K562 (cell line): ENCODE measurements at regions of chr1 and their contacts with region 1.

Region 1: GRCh38 chr1:110196917-110197765 is 13.0 kb upstream of the KCNC4 start:
- DNase-seq: peak; percentile 66 to 93 (median 91)
- ATAC-seq: peak; percentile 93
- H3K4me3 ChIP-seq: no peak overlapping the region
- H3K27ac ChIP-seq: no peak overlapping the region
- H3K4me1 ChIP-seq: no peaks in the 10 kb centered on the region
- H3K27me3 ChIP-seq: peaks cover 20 to 70% of the 10 kb centered on the region in 2 experiments
- CTCF ChIP-seq: peak; percentile 88 to 96 (median 94)
- EP300 ChIP-seq: no peak
- POLR2A ChIP-seq: no peak
- RAD21 ChIP-seq: peak; percentile 63 to 85

Region 2: DNA sequence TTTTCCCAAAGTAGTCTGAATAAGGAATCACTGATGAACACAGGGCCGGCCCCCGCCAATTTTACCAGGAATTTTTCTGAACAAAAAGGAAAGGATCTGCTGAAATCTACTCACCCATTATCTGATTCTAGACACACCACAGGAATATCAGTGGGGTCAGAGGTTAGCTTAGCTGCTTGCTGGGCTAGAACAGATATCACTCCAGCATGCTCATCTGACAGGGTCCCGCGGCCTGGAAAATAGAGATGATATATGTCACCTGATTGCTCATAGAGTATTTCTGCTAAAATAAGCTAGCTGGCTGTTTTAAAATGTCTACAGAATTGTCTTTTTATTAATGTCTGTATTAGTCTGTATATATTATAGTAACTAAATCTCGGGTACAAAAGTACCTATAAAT is 206.7 kb after region 1 on chr1:
- CTCF ChIA-PET with region 1: no interaction called
- POLR2A ChIA-PET with region 1: no interaction called
- in situ Hi-C with region 1: no loop called
- intact Hi-C with region 1: no loop called
- DNase-seq: peak in 2 of 4 experiments; percentile 29 to 72
- ATAC-seq: no peak
- H3K4me3 ChIP-seq: no peak overlapping the region
- H3K27ac ChIP-seq: no peak overlapping the region
- H3K4me1 ChIP-seq: peaks cover 5 to 12% of the 10 kb centered on the region in 2 experiments; a peak in 3 of 5 replicates
- H3K27me3 ChIP-seq: no peaks in the 10 kb centered on the region
- CTCF ChIP-seq: no peak
- EP300 ChIP-seq: no peak
- POLR2A ChIP-seq: no peak
- RAD21 ChIP-seq: no peak

Region 3: DNA sequence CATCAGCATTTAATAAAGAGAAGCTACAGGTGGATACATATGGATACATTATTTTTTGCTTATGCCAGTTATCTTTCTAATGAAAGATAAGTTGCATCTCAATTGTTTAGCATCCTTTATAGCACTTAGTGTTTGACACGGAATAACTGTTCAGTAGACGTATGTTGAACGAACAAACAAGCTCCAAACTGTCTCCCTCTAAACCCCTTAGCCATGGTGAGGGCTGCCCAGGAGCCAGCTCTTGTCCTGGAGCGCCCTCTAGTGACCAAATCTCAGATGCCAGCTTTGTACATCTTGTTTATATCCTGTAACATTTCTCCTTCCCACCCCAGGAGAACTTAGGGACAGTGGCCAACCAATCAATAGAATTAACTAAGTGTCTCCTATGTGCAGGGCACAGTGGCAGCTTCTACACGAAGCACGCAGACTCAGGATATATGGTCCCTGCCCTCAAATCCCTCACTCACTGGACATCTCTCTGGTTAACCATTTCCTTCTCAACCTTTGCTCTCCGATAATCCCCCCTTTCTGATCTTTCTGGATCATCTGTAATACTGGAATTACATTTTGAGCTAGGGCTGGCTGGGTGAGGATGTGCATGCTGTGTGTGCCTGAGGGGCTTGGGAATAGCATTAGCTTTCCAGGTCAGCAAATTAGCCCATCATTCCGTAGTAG is 298.9 kb after region 1 on chr1:
- CTCF ChIA-PET with region 1: interaction called, 45 read pairs
- POLR2A ChIA-PET with region 1: interaction called, 5 read pairs
- in situ Hi-C with region 1: no loop called
- intact Hi-C with region 1: loop called (anchors 2 kb)
- DNase-seq: peak; percentile 86 to 91 (median 90)
- ATAC-seq: peak; percentile 96
- H3K4me3 ChIP-seq: no peak overlapping the region
- H3K27ac ChIP-seq: no peak overlapping the region
- H3K4me1 ChIP-seq: no peaks in the 10 kb centered on the region
- H3K27me3 ChIP-seq: peaks cover 8 to 50% of the 10 kb centered on the region in 2 experiments; a peak in 3 of 5 replicates
- CTCF ChIP-seq: peak; percentile 94 to 99 (median 98)
- EP300 ChIP-seq: no peak
- POLR2A ChIP-seq: no peak
- RAD21 ChIP-seq: peak; percentile 94 to 95

Region 4: DNA sequence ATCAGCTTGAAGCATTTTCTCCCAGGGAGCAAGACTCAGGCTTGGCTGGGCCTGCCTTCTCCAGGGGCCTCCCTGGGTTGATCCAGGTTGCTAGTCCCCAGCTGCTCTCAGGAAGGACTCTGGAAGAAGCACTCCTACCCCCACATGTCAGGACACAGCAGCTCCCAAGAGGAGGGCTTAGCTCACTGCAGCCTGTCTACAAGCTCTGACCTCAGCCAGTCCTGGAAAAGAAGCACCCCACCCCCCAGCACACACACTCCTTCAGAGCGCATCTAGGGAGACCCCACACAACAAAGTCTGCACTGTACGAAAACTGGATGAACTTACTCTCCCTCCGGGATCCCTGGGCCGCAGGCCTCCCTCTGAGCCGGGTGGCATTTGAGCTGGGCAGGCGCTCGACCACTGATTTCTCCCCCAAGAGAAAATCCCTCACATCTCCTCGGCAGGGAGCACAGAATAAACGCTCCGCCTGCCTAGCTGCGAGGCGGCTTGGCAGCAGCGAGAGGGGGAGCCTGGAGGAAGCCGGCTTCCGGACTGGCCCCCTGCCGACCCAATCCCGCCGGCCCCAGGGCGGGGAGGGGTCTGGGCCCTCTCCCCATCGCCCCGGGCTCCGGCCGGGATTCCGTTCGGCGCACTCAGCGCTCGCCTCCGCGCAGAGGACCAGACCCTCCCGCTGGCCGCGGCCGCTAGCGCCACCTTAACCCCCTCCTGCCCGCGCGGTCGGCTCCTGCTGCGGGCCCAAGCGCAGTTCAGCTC is 408.9 kb after region 1 on chr1 and contains the start of gene KCNA2:
- CTCF ChIA-PET with region 1: no interaction called
- POLR2A ChIA-PET with region 1: no interaction called
- in situ Hi-C with region 1: no loop called
- intact Hi-C with region 1: no loop called
- DNase-seq: no peak
- ATAC-seq: peak; percentile 36; the same call in 1 of the 3 replicates
- H3K4me3 ChIP-seq: no peak within 1 kb of the TSS
- H3K27ac ChIP-seq: no peak within 1 kb of the TSS
- H3K4me1 ChIP-seq: peaks cover 0 to 12% of the 10 kb centered on the region in 2 experiments; a peak in 1 of 5 replicates
- H3K27me3 ChIP-seq: peaks cover 67 to 74% of the 10 kb centered on the region in 2 experiments
- CTCF ChIP-seq: no peak
- EP300 ChIP-seq: no peak
- POLR2A ChIP-seq: no peak
- RAD21 ChIP-seq: no peak
- polyA plus RNA-seq, gene KCNA2: not detected

Region 5: GRCh38 chr1:110963691-110964399 is 766.7 kb after region 1 on chr1 and contains the start of gene LRIF1:
- CTCF ChIA-PET with region 1: no interaction called
- POLR2A ChIA-PET with region 1: no interaction called
- in situ Hi-C with region 1: no loop called
- intact Hi-C with region 1: no loop called
- DNase-seq: peak; percentile 97 to 100 (median 98)
- ATAC-seq: peak; percentile 97
- H3K4me3 ChIP-seq: peak within 1 kb of the TSS; percentile 76
- H3K27ac ChIP-seq: peak within 1 kb of the TSS; percentile 98
- H3K4me1 ChIP-seq: peaks cover 0 to 12% of the 10 kb centered on the region in 2 experiments; a peak in 2 of 5 replicates
- H3K27me3 ChIP-seq: no peaks in the 10 kb centered on the region
- CTCF ChIP-seq: peak; percentile 47 to 61 (median 57); a peak in 5 of 6 replicates
- EP300 ChIP-seq: peak; percentile 86
- POLR2A ChIP-seq: peak; percentile 99
- RAD21 ChIP-seq: peak in 1 of 2 experiments; percentile 7; a peak in 2 of 4 replicates
- polyA plus RNA-seq, gene LRIF1: 79.7 to 86.1 TPM